T-cell (primary cell): ENCODE measurements at regions of chrX and their contacts with region 1.

Region 1: GRCh38 chrX:148647651-148648050 is 147.2 kb downstream of the AFF2 start:
- DNase-seq: no peak
- ATAC-seq: no peak
- H3K4me3 ChIP-seq: no peak overlapping the region
- H3K4me3 Mint-ChIP-seq: no peak overlapping the region
- H3K27ac ChIP-seq: no peak overlapping the region
- H3K27ac Mint-ChIP-seq: no peak overlapping the region
- H3K4me1 ChIP-seq: no peaks in the 10 kb centered on the region
- H3K4me1 Mint-ChIP-seq: no peaks in the 10 kb centered on the region
- H3K27me3 ChIP-seq: no peaks in the 10 kb centered on the region
- H3K27me3 Mint-ChIP-seq: peaks cover 0 to 10% of the 10 kb centered on the region in 2 donors

Region 2: DNA sequence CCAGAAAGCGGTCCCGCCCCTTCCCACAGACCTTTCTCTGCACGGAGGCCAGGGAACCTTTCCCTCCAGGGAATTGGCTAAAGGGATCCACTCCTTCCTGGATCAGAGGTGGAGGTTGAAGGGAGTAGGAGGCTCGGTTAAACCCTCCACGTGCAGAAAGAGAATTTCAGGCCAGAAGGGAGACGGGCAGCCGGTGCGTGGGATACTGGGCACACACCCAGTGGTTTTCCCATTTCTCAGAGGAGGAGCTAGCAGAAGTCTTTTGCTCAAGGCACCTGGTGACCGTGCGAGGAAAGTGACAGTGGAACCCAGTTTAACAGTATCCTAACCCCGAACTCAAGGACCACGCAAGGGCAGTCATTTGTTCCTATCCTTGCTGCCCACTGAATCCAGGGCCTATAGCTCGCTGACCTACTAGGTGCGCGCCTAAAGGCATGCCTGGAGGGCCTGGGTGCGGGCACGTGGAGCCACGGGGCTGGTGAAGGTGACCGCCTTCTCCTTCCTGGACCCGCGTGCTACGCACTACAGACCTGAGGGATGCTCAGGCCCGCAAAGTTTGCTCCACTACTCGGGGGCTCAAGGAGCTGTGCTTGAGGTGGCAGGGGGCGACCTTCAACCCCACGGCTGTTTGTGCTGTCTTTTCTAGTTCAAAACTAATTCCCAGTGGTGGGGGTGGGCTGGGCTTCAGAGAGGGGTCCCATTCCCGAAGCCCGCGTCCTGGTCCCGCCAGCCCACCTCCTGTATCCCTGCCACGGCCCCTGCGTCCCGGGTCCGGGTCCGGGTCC is 147.8 kb before region 1 on chrX:
- CTCF ChIA-PET with region 1: no interaction called
- POLR2A ChIA-PET with region 1: interaction called in 1 of 2 experiments, 18 read pairs
- DNase-seq: no peak
- ATAC-seq: no peak
- H3K4me3 ChIP-seq: peak overlapping the region; percentile 10 to 37
- H3K4me3 Mint-ChIP-seq: peak overlapping the region; percentile 43 to 61 (median 51)
- H3K27ac ChIP-seq: no peak overlapping the region
- H3K27ac Mint-ChIP-seq: no peak overlapping the region
- H3K4me1 ChIP-seq: peaks cover 0 to 17% of the 10 kb centered on the region in 2 experiments
- H3K4me1 Mint-ChIP-seq: peaks cover 8 to 14% (median 11%) of the 10 kb centered on the region in 3 donors
- H3K27me3 ChIP-seq: peaks cover 0 to 26% of the 10 kb centered on the region in 2 experiments
- H3K27me3 Mint-ChIP-seq: peaks cover 4 to 26% of the 10 kb centered on the region in 2 donors

Region 3: GRCh38 chrX:148552775-148553174 is 94.9 kb before region 1 on chrX:
- CTCF ChIA-PET with region 1: no interaction called
- POLR2A ChIA-PET with region 1: no interaction called
- DNase-seq: peak in 1 of 35 experiments; percentile 2
- ATAC-seq: no peak
- H3K4me3 ChIP-seq: no peak overlapping the region
- H3K4me3 Mint-ChIP-seq: no peak overlapping the region
- H3K27ac ChIP-seq: no peak overlapping the region
- H3K27ac Mint-ChIP-seq: no peak overlapping the region
- H3K4me1 ChIP-seq: no peaks in the 10 kb centered on the region
- H3K4me1 Mint-ChIP-seq: peaks cover 0 to 3% (median 0%) of the 10 kb centered on the region in 3 donors
- H3K27me3 ChIP-seq: no peaks in the 10 kb centered on the region
- H3K27me3 Mint-ChIP-seq: peaks cover 0 to 14% of the 10 kb centered on the region in 2 donors

Region 4: GRCh38 chrX:148588649-148589310 is 58.9 kb before region 1 on chrX:
- CTCF ChIA-PET with region 1: no interaction called
- POLR2A ChIA-PET with region 1: no interaction called
- DNase-seq: no peak
- ATAC-seq: no peak
- H3K4me3 ChIP-seq: no peak overlapping the region
- H3K4me3 Mint-ChIP-seq: no peak overlapping the region
- H3K27ac ChIP-seq: no peak overlapping the region
- H3K27ac Mint-ChIP-seq: no peak overlapping the region
- H3K4me1 ChIP-seq: no peaks in the 10 kb centered on the region
- H3K4me1 Mint-ChIP-seq: no peaks in the 10 kb centered on the region
- H3K27me3 ChIP-seq: no peaks in the 10 kb centered on the region
- H3K27me3 Mint-ChIP-seq: peaks cover 0 to 9% of the 10 kb centered on the region in 2 donors